Naive thymus-derived CD4-positive, alpha-beta T cell (primary cell): ENCODE measurements at regions of chr11 and their contacts with region 1.

Region 1: GRCh38 chr11:14907411-14908213 is 15.6 kb upstream of the CYP2R1 start:
- DNase-seq: peak; percentile 64 to 85 (median 75)
- ATAC-seq: peak; percentile 76
- H3K4me3 ChIP-seq: no peak overlapping the region
- H3K4me3 Mint-ChIP-seq: peak overlapping the region in 5 of 10 donors; percentile 1 to 98 (median 12)
- H3K27ac ChIP-seq: no peak overlapping the region
- H3K27ac Mint-ChIP-seq: peak overlapping the region in 8 of 9 donors; percentile 19 to 94 (median 73)
- H3K4me1 ChIP-seq: peaks cover 0 to 9% of the 10 kb centered on the region in 2 donors
- H3K4me1 Mint-ChIP-seq: peaks cover 26 to 54% (median 43%) of the 10 kb centered on the region in 7 donors
- H3K27me3 ChIP-seq: no peaks in the 10 kb centered on the region
- H3K27me3 Mint-ChIP-seq: no peaks in the 10 kb centered on the region

Region 2: DNA sequence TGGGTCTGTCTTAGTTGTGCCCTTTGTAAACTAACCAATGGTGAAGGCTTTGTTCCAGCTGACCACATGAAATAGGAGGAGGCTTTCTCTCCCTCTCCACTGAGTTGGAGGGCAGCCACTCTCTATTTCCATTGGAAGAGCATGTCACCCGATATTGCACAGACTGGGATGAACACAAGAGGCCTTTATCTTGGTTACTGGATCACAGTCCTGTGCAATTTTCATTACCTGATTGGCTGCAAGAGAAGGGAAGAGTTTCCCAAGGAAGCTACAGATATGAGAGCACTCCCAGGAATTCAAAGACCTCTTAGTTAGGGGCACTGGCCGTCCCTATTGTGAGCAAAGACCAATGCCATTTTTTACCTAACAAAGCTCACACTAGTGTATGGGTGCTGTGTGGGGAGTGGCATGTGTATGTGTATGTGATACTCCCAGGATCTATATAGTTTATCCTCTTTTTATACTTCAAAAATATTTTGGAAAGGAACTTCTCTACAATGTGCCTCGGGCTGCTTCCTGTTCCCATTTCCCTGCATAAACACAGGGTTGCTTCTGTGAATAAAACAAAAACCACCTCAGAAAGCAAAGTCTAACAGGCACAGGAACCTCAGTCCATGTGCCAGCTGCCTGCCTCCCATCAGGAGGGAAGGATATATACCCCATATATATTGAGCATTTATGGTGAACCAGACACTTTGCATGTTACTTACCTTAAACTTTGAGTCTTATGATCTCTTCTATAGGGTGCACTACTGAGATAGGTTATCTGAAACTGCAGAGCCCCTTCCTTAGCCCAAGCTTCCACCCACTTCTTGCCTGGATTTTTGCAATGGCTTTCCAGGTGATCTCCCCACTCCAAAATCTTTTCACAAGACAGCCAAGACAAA is 1772.0 kb before region 1 on chr11:
- CTCF ChIA-PET with region 1: no interaction called
- POLR2A ChIA-PET with region 1: no interaction called
- intact Hi-C with region 1: no loop called
- DNase-seq: no peak
- ATAC-seq: no peak
- H3K4me3 ChIP-seq: no peak overlapping the region
- H3K4me3 Mint-ChIP-seq: no peak overlapping the region
- H3K27ac ChIP-seq: no peak overlapping the region
- H3K27ac Mint-ChIP-seq: no peak overlapping the region
- H3K4me1 ChIP-seq: no peaks in the 10 kb centered on the region
- H3K4me1 Mint-ChIP-seq: no peaks in the 10 kb centered on the region
- H3K27me3 ChIP-seq: no peaks in the 10 kb centered on the region
- H3K27me3 Mint-ChIP-seq: peaks cover 18 to 48% (median 35%) of the 10 kb centered on the region in 5 donors

Region 3: DNA sequence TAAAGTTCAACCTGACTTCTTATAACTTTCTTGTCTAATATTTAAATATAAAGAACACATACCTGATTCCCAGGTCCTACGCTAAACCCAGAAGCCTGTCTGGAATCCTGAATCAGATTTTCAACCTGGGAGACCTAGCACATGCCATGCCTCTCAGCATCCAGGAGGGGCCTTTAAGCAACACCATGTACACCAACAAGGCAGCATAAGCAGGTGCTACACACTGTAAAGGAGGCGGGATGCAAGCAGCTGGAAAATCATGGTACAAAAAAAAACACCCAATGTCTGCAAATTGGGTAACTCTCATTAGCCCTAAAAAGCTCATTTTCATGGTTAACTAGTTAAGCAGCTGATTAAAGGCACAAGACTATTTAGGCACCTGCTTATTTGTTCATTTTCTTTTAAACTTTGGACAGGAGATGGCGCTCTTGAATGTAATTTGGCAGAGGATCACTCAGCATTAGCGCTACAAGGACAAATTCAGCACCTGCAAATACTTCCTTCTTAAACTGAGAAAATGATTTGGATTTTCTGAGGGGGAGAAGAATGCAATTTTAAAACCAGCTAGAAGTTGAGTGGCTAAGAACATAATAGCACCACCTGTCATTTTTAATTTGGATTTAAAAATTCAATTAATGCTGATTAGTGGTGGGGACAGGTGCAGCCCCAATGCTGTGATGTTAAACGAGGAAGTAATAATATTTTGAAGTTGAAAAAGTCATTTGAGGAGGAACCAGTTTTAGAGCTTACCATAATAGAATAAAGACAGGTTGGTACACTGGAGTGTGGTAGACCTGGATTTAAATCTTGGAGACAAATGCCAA is 1135.2 kb before region 1 on chr11:
- CTCF ChIA-PET with region 1: interaction called, 11 read pairs
- POLR2A ChIA-PET with region 1: no interaction called
- intact Hi-C with region 1: loop called (anchors 5 to 10 kb)
- DNase-seq: peak in 7 of 9 donors; percentile 61 to 80 (median 75)
- ATAC-seq: peak; percentile 79
- H3K4me3 ChIP-seq: no peak overlapping the region
- H3K4me3 Mint-ChIP-seq: no peak overlapping the region
- H3K27ac ChIP-seq: no peak overlapping the region
- H3K27ac Mint-ChIP-seq: no peak overlapping the region
- H3K4me1 ChIP-seq: no peaks in the 10 kb centered on the region
- H3K4me1 Mint-ChIP-seq: peaks cover 0 to 9% (median 5%) of the 10 kb centered on the region in 7 donors
- H3K27me3 ChIP-seq: no peaks in the 10 kb centered on the region
- H3K27me3 Mint-ChIP-seq: peaks cover 0 to 44% (median 4%) of the 10 kb centered on the region in 5 donors

Region 4: GRCh38 chr11:14075118-14076078 is 832.2 kb before region 1 on chr11:
- CTCF ChIA-PET with region 1: no interaction called
- POLR2A ChIA-PET with region 1: no interaction called
- intact Hi-C with region 1: loop called in 1 of 2 experiments (anchors 10 kb)
- DNase-seq: peak; percentile 8 to 79 (median 67)
- ATAC-seq: peak; percentile 94
- H3K4me3 ChIP-seq: peak overlapping the region; percentile 39
- H3K4me3 Mint-ChIP-seq: peak overlapping the region; percentile 49 to 90 (median 74)
- H3K27ac ChIP-seq: peak overlapping the region; percentile 11
- H3K27ac Mint-ChIP-seq: peak overlapping the region; percentile 56 to 94 (median 88)
- H3K4me1 ChIP-seq: peaks cover 0 to 63% of the 10 kb centered on the region in 2 donors
- H3K4me1 Mint-ChIP-seq: peaks cover 43 to 74% (median 67%) of the 10 kb centered on the region in 7 donors
- H3K27me3 ChIP-seq: no peaks in the 10 kb centered on the region
- H3K27me3 Mint-ChIP-seq: peaks cover 0 to 21% (median 0%) of the 10 kb centered on the region in 5 donors

Region 5: DNA sequence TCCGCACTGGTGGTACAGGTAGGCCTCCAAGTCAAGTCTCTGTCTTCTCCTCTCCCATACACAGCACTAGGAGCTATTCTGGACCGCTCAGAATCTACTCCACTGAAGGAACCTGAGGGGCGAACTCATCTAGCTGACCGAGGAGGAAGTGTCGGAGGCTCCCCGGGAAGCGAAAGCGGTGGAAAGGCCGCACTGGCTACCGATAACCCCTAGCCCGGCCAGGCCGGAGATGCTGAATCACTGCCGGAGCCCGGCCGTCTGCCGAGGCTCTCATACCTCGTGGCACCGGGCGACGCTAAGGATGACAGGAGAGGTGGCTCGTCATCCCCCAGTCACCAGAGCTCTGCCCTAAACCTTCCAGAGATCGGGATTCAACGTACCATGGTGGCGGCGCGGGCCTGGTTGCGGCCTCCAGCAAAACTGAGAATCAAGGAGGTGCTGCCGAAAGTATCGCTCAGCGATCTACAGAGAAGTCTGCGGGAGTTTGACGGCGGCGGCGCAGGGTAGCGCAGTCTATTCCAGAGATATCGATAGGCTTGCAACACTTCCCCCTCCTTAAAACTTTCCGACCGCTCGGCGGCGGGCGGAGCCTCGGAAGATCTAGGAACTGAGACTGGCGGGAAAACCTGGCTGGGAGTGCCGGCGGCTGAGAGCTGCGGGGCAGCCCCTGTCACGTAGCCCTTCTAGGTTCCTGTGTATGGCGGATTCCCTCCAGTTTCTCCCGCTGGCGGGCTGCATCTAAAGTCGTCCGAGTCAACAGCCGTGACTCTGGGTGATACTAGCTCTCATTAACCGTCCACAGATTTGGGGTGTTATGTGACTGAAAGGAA is 387.5 kb before region 1 on chr11 and contains the start of gene PSMA1:
- CTCF ChIA-PET with region 1: interaction called, 3 read pairs
- POLR2A ChIA-PET with region 1: interaction called, 3 read pairs
- intact Hi-C with region 1: loop called (anchors 1 kb)
- DNase-seq: peak; percentile 72 to 95 (median 89)
- ATAC-seq: peak; percentile 96
- H3K4me3 ChIP-seq: peak within 1 kb of the TSS; percentile 70
- H3K4me3 Mint-ChIP-seq: peak within 1 kb of the TSS; percentile 86 to 99 (median 97)
- H3K27ac ChIP-seq: peak within 1 kb of the TSS; percentile 96
- H3K27ac Mint-ChIP-seq: peak within 1 kb of the TSS; percentile 93 to 99 (median 96)
- H3K4me1 ChIP-seq: peaks cover 14 to 16% of the 10 kb centered on the region in 2 donors
- H3K4me1 Mint-ChIP-seq: peaks cover 15 to 43% (median 38%) of the 10 kb centered on the region in 7 donors
- H3K27me3 ChIP-seq: no peaks in the 10 kb centered on the region
- H3K27me3 Mint-ChIP-seq: no peaks in the 10 kb centered on the region
- total RNA-seq, gene PSMA1: 103 to 253 (median 120) TPM

Region 6: DNA sequence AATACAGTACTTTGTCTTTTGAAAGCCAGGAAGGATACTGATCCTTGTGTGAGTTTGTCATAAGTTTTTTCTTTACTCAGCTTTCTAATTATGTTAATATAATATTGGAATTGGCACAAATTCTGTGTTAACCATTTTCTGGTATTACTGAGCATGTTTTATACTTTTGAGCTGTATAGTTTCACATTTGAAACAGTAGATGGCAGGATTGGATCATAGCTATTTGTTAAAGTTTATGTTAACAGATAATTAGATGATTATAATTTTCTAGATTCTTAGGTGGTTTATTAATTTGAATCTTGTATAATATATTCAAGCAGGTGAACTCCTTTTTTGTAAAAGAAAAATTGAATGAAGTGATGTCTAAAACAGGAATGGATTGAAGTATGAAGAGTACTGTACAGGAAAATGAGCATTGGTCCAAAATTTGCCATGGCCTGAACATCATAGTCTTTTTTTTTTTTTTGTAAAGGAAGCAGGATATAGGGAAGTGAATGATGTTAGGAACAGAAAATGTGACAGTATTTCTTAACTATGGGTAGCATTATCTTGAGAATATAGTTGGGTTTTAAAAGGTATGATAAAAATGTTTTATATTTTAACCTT is 117.6 kb before region 1 on chr11:
- CTCF ChIA-PET with region 1: interaction called, 82 read pairs
- POLR2A ChIA-PET with region 1: interaction called, 5 read pairs
- intact Hi-C with region 1: loop called (anchors 1 kb)
- DNase-seq: peak in 4 of 9 donors; percentile 19 to 37 (median 36)
- ATAC-seq: peak; percentile 42
- H3K4me3 ChIP-seq: no peak overlapping the region
- H3K4me3 Mint-ChIP-seq: no peak overlapping the region
- H3K27ac ChIP-seq: no peak overlapping the region
- H3K27ac Mint-ChIP-seq: peak overlapping the region in 7 of 9 donors; percentile 2 to 74 (median 51)
- H3K4me1 ChIP-seq: no peaks in the 10 kb centered on the region
- H3K4me1 Mint-ChIP-seq: peaks cover 4 to 39% (median 17%) of the 10 kb centered on the region in 7 donors
- H3K27me3 ChIP-seq: no peaks in the 10 kb centered on the region
- H3K27me3 Mint-ChIP-seq: no peaks in the 10 kb centered on the region

Region 7: GRCh38 chr11:14927146-14927545 is 19.5 kb after region 1 on chr11:
- CTCF ChIA-PET with region 1: interaction called, 10 read pairs
- POLR2A ChIA-PET with region 1: no interaction called
- intact Hi-C with region 1: no loop called
- DNase-seq: no peak
- ATAC-seq: no peak
- H3K4me3 ChIP-seq: no peak overlapping the region
- H3K4me3 Mint-ChIP-seq: no peak overlapping the region
- H3K27ac ChIP-seq: no peak overlapping the region
- H3K27ac Mint-ChIP-seq: no peak overlapping the region
- H3K4me1 ChIP-seq: no peaks in the 10 kb centered on the region
- H3K4me1 Mint-ChIP-seq: no peaks in the 10 kb centered on the region
- H3K27me3 ChIP-seq: no peaks in the 10 kb centered on the region
- H3K27me3 Mint-ChIP-seq: no peaks in the 10 kb centered on the region

Region 8: DNA sequence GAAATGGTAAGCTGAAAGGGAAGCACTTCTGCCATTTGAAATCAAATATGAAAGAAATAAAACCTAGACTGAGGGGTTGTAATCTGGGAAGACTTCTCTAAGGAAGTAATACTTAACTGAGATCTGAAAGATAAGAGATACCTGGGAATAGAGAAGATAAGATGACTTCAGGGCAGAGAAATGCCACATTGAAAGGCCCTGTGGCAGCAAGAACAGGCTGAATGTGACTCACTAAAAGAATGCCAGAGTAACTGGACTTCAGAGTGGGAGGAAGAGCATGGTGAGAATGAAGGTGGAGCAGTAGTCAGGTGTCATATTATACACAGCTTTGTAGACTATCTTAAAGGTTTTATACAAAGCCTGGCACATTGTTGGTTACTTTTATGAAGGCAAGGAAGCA is 47.0 kb after region 1 on chr11:
- CTCF ChIA-PET with region 1: no interaction called
- POLR2A ChIA-PET with region 1: no interaction called
- intact Hi-C with region 1: no loop called
- DNase-seq: no peak
- ATAC-seq: no peak
- H3K4me3 ChIP-seq: no peak overlapping the region
- H3K4me3 Mint-ChIP-seq: no peak overlapping the region
- H3K27ac ChIP-seq: no peak overlapping the region
- H3K27ac Mint-ChIP-seq: peak overlapping the region in 1 of 9 donors; percentile 4
- H3K4me1 ChIP-seq: no peaks in the 10 kb centered on the region
- H3K4me1 Mint-ChIP-seq: peaks cover 0 to 8% (median 0%) of the 10 kb centered on the region in 7 donors
- H3K27me3 ChIP-seq: no peaks in the 10 kb centered on the region
- H3K27me3 Mint-ChIP-seq: peaks cover 0 to 5% (median 0%) of the 10 kb centered on the region in 5 donors

Region 9: DNA sequence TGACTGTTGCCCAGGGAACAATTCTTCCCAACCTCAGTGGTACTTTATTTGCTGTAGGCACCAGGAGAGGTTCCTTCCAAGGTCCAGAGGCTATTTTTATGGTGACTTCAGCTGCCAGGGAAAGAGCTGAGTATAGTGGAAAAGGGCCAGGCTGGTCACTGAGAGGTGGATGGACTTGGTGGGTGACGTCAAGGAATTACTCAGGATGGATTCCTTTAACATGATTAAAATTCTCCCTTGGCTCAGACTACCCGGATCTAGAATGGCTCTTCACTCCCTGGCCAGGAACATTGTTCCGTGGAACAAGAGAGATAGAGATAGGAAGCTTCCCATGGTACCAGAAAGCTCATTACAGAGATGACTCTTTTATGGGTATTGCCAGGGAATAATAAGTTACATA is 73.2 kb after region 1 on chr11:
- CTCF ChIA-PET with region 1: no interaction called
- POLR2A ChIA-PET with region 1: no interaction called
- intact Hi-C with region 1: no loop called
- DNase-seq: no peak
- ATAC-seq: no peak
- H3K4me3 ChIP-seq: no peak overlapping the region
- H3K4me3 Mint-ChIP-seq: no peak overlapping the region
- H3K27ac ChIP-seq: no peak overlapping the region
- H3K27ac Mint-ChIP-seq: no peak overlapping the region
- H3K4me1 ChIP-seq: no peaks in the 10 kb centered on the region
- H3K4me1 Mint-ChIP-seq: peaks cover 0 to 2% (median 0%) of the 10 kb centered on the region in 7 donors
- H3K27me3 ChIP-seq: peaks cover 1 to 4% of the 10 kb centered on the region in 2 donors
- H3K27me3 Mint-ChIP-seq: peaks cover 22 to 53% (median 30%) of the 10 kb centered on the region in 5 donors

Region 10: DNA sequence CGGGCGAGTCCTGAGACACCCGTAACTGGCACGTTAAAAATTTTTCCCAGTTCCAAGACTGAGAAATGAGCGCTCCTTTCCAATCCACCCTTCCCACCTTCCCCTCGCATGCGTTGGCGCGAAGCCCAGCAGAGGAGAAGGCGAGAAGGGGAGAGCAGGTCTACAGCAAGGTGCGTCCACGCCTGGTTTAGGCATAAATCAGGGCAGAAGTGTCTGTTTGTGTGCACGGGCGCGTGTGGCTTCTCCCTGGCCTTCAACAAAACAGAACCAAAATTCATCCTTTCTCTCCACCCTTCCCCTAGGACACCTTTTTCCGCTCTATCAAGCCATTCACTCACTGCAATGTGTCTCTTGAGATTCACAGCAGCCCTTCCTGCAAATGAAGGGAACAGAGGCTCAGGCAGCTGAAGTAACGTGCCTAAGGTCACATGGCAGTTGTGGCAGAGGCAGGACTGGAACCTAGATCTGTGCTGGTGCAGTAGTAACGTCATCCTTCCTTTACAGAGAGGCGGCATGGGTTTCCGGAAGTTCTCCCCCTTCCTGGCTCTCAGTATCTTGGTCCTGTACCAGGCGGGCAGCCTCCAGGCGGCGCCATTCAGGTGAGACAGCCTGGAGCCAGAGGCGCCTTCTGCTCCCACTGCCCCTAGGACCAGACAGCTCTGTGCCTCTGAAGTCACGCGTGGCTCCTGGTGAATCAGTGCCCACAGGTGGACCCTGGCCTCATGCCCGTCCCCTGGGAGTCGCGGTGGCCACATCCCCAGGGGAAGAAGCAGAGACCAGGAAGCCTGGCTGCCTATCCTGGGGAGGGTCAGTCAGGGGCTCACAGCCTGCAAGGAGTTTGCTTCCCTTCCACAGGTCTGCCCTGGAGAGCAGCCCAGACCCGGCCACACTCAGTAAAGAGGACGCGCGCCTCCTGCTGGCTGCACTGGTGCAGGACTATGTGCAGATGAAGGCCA is 166.9 kb after region 1 on chr11:
- CTCF ChIA-PET with region 1: interaction called, 110 read pairs
- POLR2A ChIA-PET with region 1: interaction called, 5 read pairs
- intact Hi-C with region 1: loop called (anchors 1 kb)
- DNase-seq: peak; percentile 66 to 86 (median 75)
- ATAC-seq: peak; percentile 88
- H3K4me3 ChIP-seq: peak overlapping the region; percentile 41
- H3K4me3 Mint-ChIP-seq: peak overlapping the region; percentile 76 to 95 (median 86)
- H3K27ac ChIP-seq: no peak overlapping the region
- H3K27ac Mint-ChIP-seq: peak overlapping the region in 4 of 9 donors; percentile 29 to 86 (median 56)
- H3K4me1 ChIP-seq: peaks cover 6 to 14% of the 10 kb centered on the region in 2 donors
- H3K4me1 Mint-ChIP-seq: peaks cover 12 to 23% (median 17%) of the 10 kb centered on the region in 7 donors
- H3K27me3 ChIP-seq: peaks cover 4% of the 10 kb centered on the region in 2 donors
- H3K27me3 Mint-ChIP-seq: peaks cover 9 to 47% (median 14%) of the 10 kb centered on the region in 5 donors